ENCODE measurements at regions of chr14 and their contacts with region 1.

Region 1: GRCh38 chr14:52824507-52824906 is 33.1 kb upstream of the GNPNAT1 start:
- DNase-seq: no peak
- ATAC-seq: peak; percentile 54
- H3K4me3 ChIP-seq: no peak overlapping the region
- H3K27ac ChIP-seq: no peak overlapping the region
- H3K4me1 ChIP-seq: peaks cover 5% of the 10 kb centered on the region
- H3K27me3 ChIP-seq: no peaks in the 10 kb centered on the region
- CTCF ChIP-seq: no peak
- EP300 ChIP-seq: no peak
- POLR2A ChIP-seq: no peak
- RAD21 ChIP-seq: no peak

Region 2: DNA sequence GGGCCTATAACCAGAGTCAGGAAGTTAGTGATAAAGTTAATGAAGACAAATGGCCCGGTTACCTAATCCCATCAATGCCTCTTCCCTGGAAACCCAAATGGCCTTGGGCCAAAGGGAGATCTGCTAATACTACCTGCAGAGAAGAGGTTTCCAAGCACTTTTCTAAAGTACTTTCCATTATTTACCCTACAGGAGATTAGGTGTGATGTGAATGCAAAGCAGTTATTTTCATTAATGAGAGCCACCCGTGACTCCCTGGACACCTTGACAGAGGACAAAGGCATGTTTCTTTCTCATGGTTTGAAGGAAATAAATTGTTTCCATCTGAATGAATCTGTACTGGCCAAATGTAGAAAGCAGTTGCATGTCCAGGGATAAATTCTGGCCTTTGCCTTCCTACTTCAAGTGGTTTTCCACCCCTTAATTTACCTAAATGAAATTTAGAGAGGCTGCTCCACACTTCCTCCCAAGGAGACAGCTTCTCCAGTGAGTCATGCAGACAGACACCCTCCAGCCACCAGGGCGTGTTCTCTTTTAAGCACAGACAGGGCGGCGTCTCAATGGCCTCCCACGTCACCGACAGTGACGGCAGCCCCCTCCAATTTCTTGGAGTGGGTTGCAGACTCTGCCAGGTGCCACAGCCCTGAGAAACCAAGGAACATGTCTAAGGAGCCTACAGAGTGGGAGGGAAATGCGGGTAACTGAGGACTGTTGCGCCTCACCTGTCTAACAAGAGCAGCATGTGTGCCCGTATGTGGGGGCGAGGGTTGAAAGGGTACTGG is 10.8 kb after region 1 on chr14:
- CTCF ChIA-PET with region 1: interaction called, 5 read pairs
- POLR2A ChIA-PET with region 1: no interaction called
- RAD21 ChIA-PET with region 1: interaction called, 3 read pairs
- SMC1A ChIA-PET with region 1: interaction called, 17 read pairs
- in situ Hi-C with region 1: no loop called
- intact Hi-C with region 1: no loop called
- DNase-seq: no peak
- ATAC-seq: no peak
- H3K4me3 ChIP-seq: no peak overlapping the region
- H3K27ac ChIP-seq: no peak overlapping the region
- H3K4me1 ChIP-seq: no peaks in the 10 kb centered on the region
- H3K27me3 ChIP-seq: no peaks in the 10 kb centered on the region
- CTCF ChIP-seq: no peak
- EP300 ChIP-seq: no peak
- POLR2A ChIP-seq: no peak
- RAD21 ChIP-seq: no peak

Region 3: GRCh38 chr14:52923902-52924575 is 99.5 kb after region 1 on chr14:
- CTCF ChIA-PET with region 1: interaction called, 8 read pairs
- POLR2A ChIA-PET with region 1: no interaction called
- RAD21 ChIA-PET with region 1: interaction called, 12 read pairs
- SMC1A ChIA-PET with region 1: interaction called, 3 read pairs
- in situ Hi-C with region 1: no loop called
- intact Hi-C with region 1: no loop called
- DNase-seq: no peak
- ATAC-seq: peak; percentile 82
- H3K4me3 ChIP-seq: no peak overlapping the region
- H3K27ac ChIP-seq: no peak overlapping the region
- H3K4me1 ChIP-seq: no peaks in the 10 kb centered on the region
- H3K27me3 ChIP-seq: no peaks in the 10 kb centered on the region
- CTCF ChIP-seq: peak; percentile 15 to 45 (median 28); a peak in 3 of 6 replicates
- EP300 ChIP-seq: no peak
- POLR2A ChIP-seq: no peak
- RAD21 ChIP-seq: peak; percentile 52

Region 4: DNA sequence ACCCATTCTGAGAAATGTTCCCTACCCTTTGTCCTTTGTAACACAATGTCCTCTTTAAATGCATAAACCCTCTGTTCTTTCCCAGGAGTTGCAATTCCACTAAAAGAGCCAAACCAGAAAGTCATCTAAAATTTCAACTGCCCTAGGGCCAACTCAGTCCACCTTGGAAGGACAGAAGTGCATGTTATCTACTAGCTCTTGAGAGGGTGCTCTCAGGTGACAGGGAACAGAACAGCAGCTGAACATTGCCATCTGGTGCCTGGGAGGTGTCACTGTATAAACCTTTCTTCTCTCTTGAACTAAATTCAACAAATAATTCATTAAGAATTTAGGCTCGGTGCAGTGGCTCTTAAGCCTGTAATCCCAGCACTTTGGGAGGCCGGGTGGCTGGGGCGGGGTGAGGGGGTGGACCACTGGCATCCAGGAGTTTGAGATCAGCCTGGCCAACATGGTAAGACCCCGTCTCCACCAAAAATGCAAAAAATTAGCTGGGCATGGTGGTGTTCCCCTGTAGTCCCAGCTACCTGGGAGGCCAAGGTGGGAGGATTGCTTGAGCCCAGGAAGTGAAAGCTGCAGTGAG is 136.6 kb after region 1 on chr14:
- CTCF ChIA-PET with region 1: interaction called, 115 read pairs
- POLR2A ChIA-PET with region 1: no interaction called
- RAD21 ChIA-PET with region 1: interaction called, 68 read pairs
- SMC1A ChIA-PET with region 1: interaction called, 58 read pairs
- in situ Hi-C with region 1: loop called (anchors 5 kb)
- intact Hi-C with region 1: loop called (anchors 1 kb)
- DNase-seq: peak; percentile 13
- ATAC-seq: peak; percentile 96
- H3K4me3 ChIP-seq: no peak overlapping the region
- H3K27ac ChIP-seq: no peak overlapping the region
- H3K4me1 ChIP-seq: no peaks in the 10 kb centered on the region
- H3K27me3 ChIP-seq: no peaks in the 10 kb centered on the region
- CTCF ChIP-seq: peak; percentile 58 to 82 (median 64)
- EP300 ChIP-seq: no peak
- POLR2A ChIP-seq: no peak
- RAD21 ChIP-seq: peak; percentile 95

Region 5: DNA sequence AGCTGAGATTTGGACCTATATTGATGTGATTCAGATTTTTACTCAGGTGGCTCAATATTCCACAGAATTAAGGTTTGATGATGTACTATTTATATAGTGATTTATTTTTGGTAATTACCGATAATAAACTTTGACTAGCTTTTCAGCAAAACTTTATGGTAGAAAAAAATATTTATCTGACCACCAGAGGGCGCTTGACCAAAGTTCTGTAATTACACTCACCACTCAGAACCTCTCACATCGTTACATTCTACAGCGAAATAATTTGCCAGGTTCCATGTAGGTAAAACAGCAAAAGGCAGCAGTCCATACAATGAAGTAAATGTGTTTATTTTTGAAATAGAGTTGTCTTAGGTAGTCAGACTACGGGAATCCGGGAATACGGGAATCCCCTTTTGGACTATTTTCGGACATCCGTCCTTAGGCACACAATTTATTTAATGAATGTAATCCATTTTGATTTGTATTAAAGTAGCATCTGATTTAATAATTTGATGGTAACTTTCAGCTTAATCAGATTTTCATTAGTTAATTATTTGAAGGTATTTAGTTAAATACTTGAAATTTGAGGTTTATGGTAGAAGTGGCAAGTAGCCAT is 471.6 kb after region 1 on chr14:
- CTCF ChIA-PET with region 1: interaction called, 11 read pairs
- POLR2A ChIA-PET with region 1: no interaction called
- RAD21 ChIA-PET with region 1: no interaction called
- SMC1A ChIA-PET with region 1: no interaction called
- in situ Hi-C with region 1: no loop called
- intact Hi-C with region 1: no loop called
- DNase-seq: no peak
- ATAC-seq: peak; percentile 63
- H3K4me3 ChIP-seq: no peak overlapping the region
- H3K27ac ChIP-seq: no peak overlapping the region
- H3K4me1 ChIP-seq: no peaks in the 10 kb centered on the region
- H3K27me3 ChIP-seq: no peaks in the 10 kb centered on the region
- CTCF ChIP-seq: peak; percentile 49 to 55 (median 52); a peak in 5 of 6 replicates
- EP300 ChIP-seq: no peak
- POLR2A ChIP-seq: no peak
- RAD21 ChIP-seq: peak; percentile 32; the same call in 1 of the 2 replicates